Caco-2 (cell line): ENCODE measurements at regions of chr2 and their contacts with region 1.

Region 1: DNA sequence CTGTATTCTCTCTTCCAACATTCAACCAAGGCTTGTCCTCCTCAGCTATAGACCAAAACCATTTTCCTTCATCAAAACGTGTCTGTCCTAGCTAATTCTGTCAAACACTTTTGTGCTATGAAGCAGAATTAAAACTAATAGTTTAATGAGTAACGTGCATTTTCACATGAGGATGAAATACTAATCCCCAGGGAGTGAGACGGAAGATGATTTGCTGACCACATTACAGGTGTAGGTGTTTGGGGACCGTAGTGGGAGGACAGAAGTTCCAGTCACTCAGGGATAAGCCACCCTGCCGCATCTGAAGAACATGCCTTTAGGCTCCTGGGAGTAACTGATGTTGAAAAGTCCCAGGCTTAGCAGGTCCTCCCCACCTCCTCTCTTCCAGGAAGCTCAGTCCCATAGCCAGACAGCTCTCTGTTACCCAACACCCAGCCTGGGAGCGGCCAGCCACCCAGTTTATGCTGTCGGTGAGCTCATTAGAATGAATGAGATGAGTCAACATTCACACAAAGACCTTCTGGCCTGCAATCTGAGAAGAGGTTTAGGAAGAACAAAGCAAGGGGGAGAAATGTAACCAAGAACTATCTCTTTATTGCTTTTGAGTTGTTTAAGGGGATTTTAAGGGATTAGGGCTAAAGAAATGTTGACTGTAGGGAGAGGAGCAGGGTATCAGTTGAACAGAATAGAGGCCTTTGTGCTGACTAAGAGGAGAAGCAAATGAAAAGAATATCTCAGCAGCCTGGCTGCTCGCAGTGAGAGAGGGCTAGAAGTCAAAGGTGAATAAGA is 122.5 kb downstream of the FOXI3 start:
- DNase-seq: peak; percentile 93
- H3K4me3 ChIP-seq: no peak overlapping the region
- H3K4me3 Mint-ChIP-seq: peak overlapping the region; percentile 1
- H3K27ac Mint-ChIP-seq: peak overlapping the region; percentile 14
- H3K4me1 ChIP-seq: peaks cover 15% of the 10 kb centered on the region
- H3K4me1 Mint-ChIP-seq: peaks cover 22% of the 10 kb centered on the region
- H3K27me3 ChIP-seq: no peaks in the 10 kb centered on the region; the same call in 1 of the 2 replicates
- H3K27me3 Mint-ChIP-seq: peaks cover 27% of the 10 kb centered on the region
- CTCF ChIP-seq: no peak

Region 2: DNA sequence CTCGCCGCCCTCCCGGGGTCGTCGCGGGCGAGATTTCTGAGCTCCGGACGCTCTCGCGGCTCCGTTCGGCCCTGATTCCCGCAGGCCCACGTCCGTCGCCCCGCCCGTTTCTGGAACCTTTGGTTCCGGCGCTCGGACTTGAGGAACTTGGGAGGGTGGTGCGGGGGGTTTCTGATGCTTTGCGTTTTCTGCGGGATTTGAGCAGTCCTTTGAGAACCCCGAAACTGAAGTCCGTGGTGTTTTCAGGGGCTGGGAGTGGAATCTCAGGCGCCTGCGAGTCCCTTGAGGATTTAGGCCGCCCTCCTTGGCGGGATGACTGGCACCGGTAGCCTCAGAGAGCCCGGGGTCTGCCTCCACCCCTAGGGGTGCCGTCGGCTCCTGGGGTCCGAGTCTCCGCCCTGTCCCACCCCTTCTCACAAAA is 159.5 kb before region 1 on chr2:
- CTCF ChIA-PET with region 1: no interaction called
- POLR2A ChIA-PET with region 1: no interaction called
- intact Hi-C with region 1: no loop called
- DNase-seq: no peak
- H3K4me3 ChIP-seq: peak overlapping the region; percentile 49
- H3K4me3 Mint-ChIP-seq: peak overlapping the region; percentile 78
- H3K27ac Mint-ChIP-seq: peak overlapping the region; percentile 78
- H3K4me1 ChIP-seq: no peaks in the 10 kb centered on the region
- H3K4me1 Mint-ChIP-seq: peaks cover 7% of the 10 kb centered on the region
- H3K27me3 ChIP-seq: no peaks in the 10 kb centered on the region
- H3K27me3 Mint-ChIP-seq: no peaks in the 10 kb centered on the region
- CTCF ChIP-seq: no peak

Region 3: GRCh38 chr2:88281302-88282217 is 48.4 kb before region 1 on chr2:
- CTCF ChIA-PET with region 1: interaction called, 4 read pairs
- POLR2A ChIA-PET with region 1: no interaction called
- intact Hi-C with region 1: loop called (anchors 1 kb)
- DNase-seq: peak; percentile 60 to 73
- H3K4me3 ChIP-seq: no peak overlapping the region
- H3K4me3 Mint-ChIP-seq: peak overlapping the region; percentile 16
- H3K27ac Mint-ChIP-seq: no peak overlapping the region
- H3K4me1 ChIP-seq: peaks cover 11% of the 10 kb centered on the region
- H3K4me1 Mint-ChIP-seq: peaks cover 12% of the 10 kb centered on the region
- H3K27me3 ChIP-seq: no peaks in the 10 kb centered on the region
- H3K27me3 Mint-ChIP-seq: peaks cover 4% of the 10 kb centered on the region
- CTCF ChIP-seq: no peak

Region 4: GRCh38 chr2:88350331-88351248 is 20.6 kb after region 1 on chr2:
- CTCF ChIA-PET with region 1: no interaction called
- POLR2A ChIA-PET with region 1: no interaction called
- intact Hi-C with region 1: loop called (anchors 1 kb)
- DNase-seq: peak; percentile 76 to 80
- H3K4me3 ChIP-seq: peak overlapping the region; percentile 33
- H3K4me3 Mint-ChIP-seq: peak overlapping the region; percentile 70
- H3K27ac Mint-ChIP-seq: peak overlapping the region; percentile 46
- H3K4me1 ChIP-seq: peaks cover 4% of the 10 kb centered on the region; the same call in 1 of the 2 replicates
- H3K4me1 Mint-ChIP-seq: no peaks in the 10 kb centered on the region
- H3K27me3 ChIP-seq: no peaks in the 10 kb centered on the region; the same call in none of the 2 replicates
- H3K27me3 Mint-ChIP-seq: peaks cover 4% of the 10 kb centered on the region
- CTCF ChIP-seq: peak; percentile 72 to 93

Region 5: GRCh38 chr2:88451811-88452565 is 122.0 kb after region 1 on chr2:
- CTCF ChIA-PET with region 1: no interaction called
- POLR2A ChIA-PET with region 1: no interaction called
- intact Hi-C with region 1: loop called (anchors 10 kb)
- DNase-seq: no peak
- H3K4me3 ChIP-seq: no peak overlapping the region
- H3K4me3 Mint-ChIP-seq: peak overlapping the region; percentile 48
- H3K27ac Mint-ChIP-seq: no peak overlapping the region
- H3K4me1 ChIP-seq: peaks cover 5% of the 10 kb centered on the region; the same call in 1 of the 2 replicates
- H3K4me1 Mint-ChIP-seq: no peaks in the 10 kb centered on the region
- H3K27me3 ChIP-seq: no peaks in the 10 kb centered on the region; the same call in 1 of the 2 replicates
- H3K27me3 Mint-ChIP-seq: peaks cover 13% of the 10 kb centered on the region
- CTCF ChIP-seq: no peak